Left ventricle myocardium inferior (tissue), 1 donor: ENCODE measurements at regions of chrX and their contacts with region 1.

Region 1: GRCh38 chrX:39814391-39814790 is 283.4 kb downstream of the BCOR start:
- DNase-seq: no peak
- H3K4me3 ChIP-seq: no peak overlapping the region
- H3K27ac ChIP-seq: peak overlapping the region; percentile 78
- H3K4me1 ChIP-seq: peaks cover 17% of the 10 kb centered on the region
- H3K27me3 ChIP-seq: no peaks in the 10 kb centered on the region
- CTCF ChIP-seq: peak; percentile 60

Region 2: DNA sequence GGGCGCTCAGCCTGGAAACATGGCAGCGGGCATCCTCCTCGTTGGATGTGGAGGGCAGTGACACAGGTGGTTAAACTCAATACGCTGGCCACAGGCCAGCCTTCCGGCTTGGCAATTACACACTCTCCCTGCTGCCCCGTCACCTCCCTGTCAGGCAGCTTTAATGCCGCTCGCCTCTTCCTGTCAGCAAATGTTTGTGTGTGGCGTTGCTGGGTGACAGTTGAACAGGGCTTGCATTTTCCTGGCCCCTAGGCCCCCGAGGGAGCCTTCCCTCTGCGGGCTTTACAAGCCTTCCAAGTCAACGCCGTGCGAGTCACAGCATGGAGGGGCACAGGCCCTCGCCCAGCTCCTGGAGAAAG is 336.6 kb before region 1 on chrX:
- intact Hi-C with region 1: no loop called
- DNase-seq: peak; percentile 79
- H3K4me3 ChIP-seq: no peak overlapping the region
- H3K27ac ChIP-seq: peak overlapping the region; percentile 68
- H3K4me1 ChIP-seq: peaks cover 27% of the 10 kb centered on the region
- H3K27me3 ChIP-seq: no peaks in the 10 kb centered on the region
- CTCF ChIP-seq: no peak

Region 3: GRCh38 chrX:39730662-39731397 is 83.6 kb before region 1 on chrX:
- intact Hi-C with region 1: loop called (anchors 10 kb)
- DNase-seq: peak; percentile 69
- H3K4me3 ChIP-seq: no peak overlapping the region
- H3K27ac ChIP-seq: peak overlapping the region; percentile 30
- H3K4me1 ChIP-seq: peaks cover 20% of the 10 kb centered on the region
- H3K27me3 ChIP-seq: no peaks in the 10 kb centered on the region
- CTCF ChIP-seq: peak; percentile 64

Region 4: GRCh38 chrX:40083120-40083978 is 269.0 kb after region 1 on chrX:
- intact Hi-C with region 1: loop called (anchors 10 kb)
- DNase-seq: peak; percentile 20
- H3K4me3 ChIP-seq: peak overlapping the region; percentile 61
- H3K27ac ChIP-seq: no peak overlapping the region
- H3K4me1 ChIP-seq: peaks cover 54% of the 10 kb centered on the region
- H3K27me3 ChIP-seq: no peaks in the 10 kb centered on the region
- CTCF ChIP-seq: no peak